Mammary epithelial cell (primary cell): ENCODE measurements at regions of chr5 and their contacts with region 1.

Region 1: DNA sequence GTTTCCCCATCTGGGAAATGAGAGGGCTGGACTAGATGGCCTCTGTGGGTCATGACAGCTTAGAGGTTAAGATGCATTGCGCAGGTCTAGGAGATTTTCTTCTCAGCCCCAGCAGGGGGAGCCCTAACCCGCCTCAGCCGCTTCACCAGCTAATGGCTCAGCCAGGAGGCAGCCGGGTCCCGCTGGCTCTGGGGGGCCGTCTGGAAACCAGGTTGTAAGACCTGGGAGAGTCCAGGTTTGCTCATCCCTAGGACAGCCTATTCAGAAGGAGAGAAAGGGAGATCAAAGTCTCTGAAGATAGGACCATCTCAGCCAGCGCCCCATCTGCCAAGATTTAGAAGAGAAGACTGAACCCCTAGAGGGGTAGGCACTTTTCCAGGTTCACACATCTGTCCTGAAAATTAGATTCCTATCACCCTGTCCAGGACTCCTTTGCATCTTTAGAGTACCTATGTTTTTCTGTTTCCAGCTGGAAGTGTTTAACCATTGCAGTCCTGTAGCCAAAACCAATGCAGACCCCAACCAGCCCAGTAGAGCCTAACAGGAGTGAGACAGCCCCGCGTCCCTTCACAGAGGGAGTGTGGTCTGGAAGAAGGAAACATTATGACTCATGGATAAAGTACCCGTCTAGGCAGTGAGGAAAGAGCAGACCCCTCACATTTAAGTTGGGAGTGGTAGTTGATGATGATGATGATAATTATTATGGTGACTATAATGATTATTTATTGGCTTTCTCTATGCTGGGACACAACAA is 27.5 kb downstream of the SPARC start:
- DNase-seq: peak; percentile 57
- H3K4me3 ChIP-seq: no peak overlapping the region
- H3K27ac ChIP-seq: no peak overlapping the region
- H3K4me1 ChIP-seq: peaks cover 7% of the 10 kb centered on the region
- H3K27me3 ChIP-seq: no peaks in the 10 kb centered on the region
- CTCF ChIP-seq: peak; percentile 71 to 89

Region 2: DNA sequence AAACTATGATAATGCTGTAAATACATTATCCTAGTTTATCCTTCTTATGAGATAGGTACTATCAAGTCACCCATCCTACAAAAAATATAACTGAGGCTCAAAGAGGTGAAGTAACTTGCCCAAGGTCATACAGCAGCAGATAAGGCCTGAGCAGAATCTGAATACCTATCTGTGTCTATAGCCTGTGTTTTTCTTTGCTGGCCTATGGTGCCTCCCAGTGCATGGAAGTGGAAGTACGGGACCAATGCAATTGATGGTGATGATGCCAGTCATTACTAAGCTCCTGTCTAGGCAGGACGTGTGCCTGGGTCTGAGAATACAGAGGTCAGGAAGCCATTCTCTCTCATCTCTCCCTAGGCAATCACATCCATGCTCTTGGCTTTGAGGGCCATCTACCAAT is 135.8 kb before region 1 on chr5:
- CTCF ChIA-PET with region 1: interaction called, 11 read pairs
- dilution Hi-C with region 1: no loop called
- in situ Hi-C with region 1: no loop called
- intact Hi-C with region 1: no loop called
- DNase-seq: peak; percentile 59
- H3K4me3 ChIP-seq: no peak overlapping the region
- H3K27ac ChIP-seq: no peak overlapping the region
- H3K4me1 ChIP-seq: no peaks in the 10 kb centered on the region
- H3K27me3 ChIP-seq: no peaks in the 10 kb centered on the region
- CTCF ChIP-seq: peak; percentile 61 to 63

Region 3: DNA sequence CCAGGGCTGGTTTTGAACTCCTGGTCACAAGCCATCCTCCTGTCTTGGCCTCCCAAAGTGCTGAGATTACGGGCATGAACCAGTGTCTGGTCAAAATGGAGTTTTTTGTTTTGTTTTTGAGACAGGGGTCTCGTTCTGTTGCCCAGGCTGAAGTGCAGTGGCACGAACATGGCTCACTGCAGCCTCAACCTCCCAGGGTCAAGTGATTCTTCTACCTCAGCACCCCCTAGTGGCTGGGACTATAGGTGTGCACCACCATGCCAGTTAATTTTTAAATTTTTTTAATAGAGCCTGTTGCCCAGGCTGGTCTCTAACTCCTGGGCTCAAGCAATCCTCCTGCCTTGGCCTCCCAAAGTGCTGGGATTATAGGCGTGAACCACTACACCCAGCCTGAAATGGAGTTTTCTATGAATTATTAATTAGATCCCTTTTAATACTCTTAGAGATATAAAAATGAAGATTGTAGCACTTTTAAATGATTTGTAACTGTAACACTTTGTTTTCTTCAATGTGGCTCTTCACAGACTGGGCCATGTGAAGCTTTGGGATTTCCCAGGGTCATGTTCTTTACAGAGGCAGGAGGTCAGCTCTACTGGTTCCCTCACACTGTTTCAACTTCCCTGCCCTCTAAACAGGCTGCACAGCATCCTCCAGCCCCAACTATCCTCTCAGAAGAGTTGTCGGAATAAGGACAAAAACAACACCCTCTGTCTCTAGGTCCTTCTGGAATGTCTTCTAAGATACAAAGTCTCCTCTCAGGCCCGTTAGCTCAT is 60.2 kb after region 1 on chr5:
- CTCF ChIA-PET with region 1: no interaction called
- dilution Hi-C with region 1: loop called (anchors 5 kb)
- in situ Hi-C with region 1: no loop called
- intact Hi-C with region 1: loop called (anchors 1 kb)
- DNase-seq: no peak
- H3K4me3 ChIP-seq: no peak overlapping the region
- H3K27ac ChIP-seq: no peak overlapping the region
- H3K4me1 ChIP-seq: peaks cover 12% of the 10 kb centered on the region
- H3K27me3 ChIP-seq: no peaks in the 10 kb centered on the region
- CTCF ChIP-seq: peak; percentile 51 to 70

Region 4: DNA sequence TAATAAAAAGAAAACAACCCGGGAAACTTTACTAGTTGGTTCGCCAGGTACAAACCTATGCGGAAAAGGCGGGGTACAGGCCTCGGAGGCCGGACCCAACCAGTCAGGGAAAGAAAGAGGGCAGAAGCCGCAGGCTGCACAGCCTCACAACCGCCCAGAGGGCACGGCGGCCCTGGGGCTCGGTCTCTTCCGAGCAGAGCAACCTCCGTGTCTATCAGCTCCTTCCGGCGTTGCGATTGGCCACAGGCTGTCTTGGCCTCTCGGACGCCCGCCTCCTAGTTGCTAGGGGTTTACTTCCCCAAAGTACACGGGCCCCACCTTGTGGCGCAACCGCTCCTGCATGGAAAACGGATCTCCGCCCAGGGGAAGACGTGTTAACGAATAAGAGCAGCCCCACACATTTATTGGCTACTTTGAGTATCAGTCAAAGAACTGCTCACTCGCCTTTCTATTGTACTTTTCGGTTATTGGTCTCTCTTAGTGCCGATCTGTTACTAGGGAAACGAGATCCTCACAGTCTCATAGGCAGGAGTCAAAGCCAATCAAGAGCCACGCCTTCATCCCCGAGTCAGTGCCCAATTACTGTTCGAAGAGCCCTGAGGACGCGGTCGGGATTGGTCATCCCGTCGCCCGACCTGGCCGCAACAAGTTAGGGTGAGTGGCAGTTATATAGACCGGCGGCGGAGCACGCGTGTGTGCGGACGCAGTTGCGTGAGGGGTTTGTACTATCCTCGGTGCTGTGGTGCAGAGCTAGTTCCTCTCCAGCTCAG is 112.3 kb after region 1 on chr5 and contains the start of gene G3BP1:
- CTCF ChIA-PET with region 1: interaction called, 6 read pairs
- dilution Hi-C with region 1: no loop called
- in situ Hi-C with region 1: no loop called
- intact Hi-C with region 1: loop called (anchors 1 kb)
- DNase-seq: peak; percentile 100
- H3K4me3 ChIP-seq: peak within 1 kb of the TSS; percentile 63 to 93 (median 80)
- H3K27ac ChIP-seq: peak within 1 kb of the TSS; percentile 84
- H3K4me1 ChIP-seq: peaks cover 26% of the 10 kb centered on the region
- H3K27me3 ChIP-seq: no peaks in the 10 kb centered on the region
- CTCF ChIP-seq: peak; percentile 36 to 77
- total RNA-seq, gene G3BP1: 193 to 252 TPM

Region 5: GRCh38 chr5:152142840-152143469 is 483.8 kb after region 1 on chr5:
- CTCF ChIA-PET with region 1: no interaction called
- dilution Hi-C with region 1: no loop called
- in situ Hi-C with region 1: no loop called
- intact Hi-C with region 1: loop called (anchors 10 kb)
- DNase-seq: peak; percentile 21
- H3K4me3 ChIP-seq: no peak overlapping the region
- H3K27ac ChIP-seq: no peak overlapping the region
- H3K4me1 ChIP-seq: no peaks in the 10 kb centered on the region
- H3K27me3 ChIP-seq: no peaks in the 10 kb centered on the region
- CTCF ChIP-seq: peak; percentile 86 to 95

Region 6: DNA sequence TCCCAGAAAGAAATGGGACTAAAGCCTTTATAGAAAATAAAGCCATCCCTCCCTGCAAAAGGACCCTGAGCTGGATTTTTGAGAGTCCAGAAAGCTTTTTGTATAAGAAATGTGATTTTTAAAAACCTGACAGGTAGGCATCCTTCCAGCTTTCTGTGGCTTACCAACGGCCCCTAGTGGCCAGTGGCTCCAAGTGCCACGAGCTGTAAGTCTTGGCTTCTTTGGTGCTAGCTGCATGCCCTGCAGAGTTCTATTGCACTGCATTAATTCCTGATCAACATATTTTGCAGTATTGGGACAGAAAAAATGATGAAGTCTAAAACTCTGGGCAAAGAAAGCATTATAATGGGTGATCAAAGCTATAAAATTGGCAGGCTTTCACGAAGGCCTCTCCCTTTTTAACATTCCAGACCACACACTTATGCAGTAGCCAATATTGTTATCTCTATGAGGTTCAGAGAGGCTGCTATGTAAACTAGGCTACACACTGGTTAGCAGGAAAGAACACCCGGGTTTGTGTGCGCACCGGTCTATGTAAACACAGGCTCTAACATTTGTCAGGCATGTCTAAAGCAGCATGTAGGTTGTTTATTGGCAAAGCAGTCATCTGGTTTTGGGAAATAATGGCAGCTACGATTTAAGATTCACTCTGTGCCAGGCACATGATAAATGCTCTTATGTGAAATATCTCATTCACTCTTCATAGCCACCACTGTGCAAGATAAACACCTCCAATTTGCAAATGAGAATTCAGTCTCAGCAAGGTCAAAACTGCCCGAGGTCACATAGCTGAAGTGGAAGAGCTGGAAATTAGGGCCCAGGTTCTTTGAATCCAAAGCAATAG is 690.7 kb after region 1 on chr5:
- CTCF ChIA-PET with region 1: no interaction called
- dilution Hi-C with region 1: no loop called
- in situ Hi-C with region 1: no loop called
- intact Hi-C with region 1: loop called (anchors 5 kb)
- DNase-seq: peak; percentile 24
- H3K4me3 ChIP-seq: no peak overlapping the region
- H3K27ac ChIP-seq: no peak overlapping the region
- H3K4me1 ChIP-seq: no peaks in the 10 kb centered on the region
- H3K27me3 ChIP-seq: no peaks in the 10 kb centered on the region
- CTCF ChIP-seq: peak; percentile 94 to 97

Region 7: DNA sequence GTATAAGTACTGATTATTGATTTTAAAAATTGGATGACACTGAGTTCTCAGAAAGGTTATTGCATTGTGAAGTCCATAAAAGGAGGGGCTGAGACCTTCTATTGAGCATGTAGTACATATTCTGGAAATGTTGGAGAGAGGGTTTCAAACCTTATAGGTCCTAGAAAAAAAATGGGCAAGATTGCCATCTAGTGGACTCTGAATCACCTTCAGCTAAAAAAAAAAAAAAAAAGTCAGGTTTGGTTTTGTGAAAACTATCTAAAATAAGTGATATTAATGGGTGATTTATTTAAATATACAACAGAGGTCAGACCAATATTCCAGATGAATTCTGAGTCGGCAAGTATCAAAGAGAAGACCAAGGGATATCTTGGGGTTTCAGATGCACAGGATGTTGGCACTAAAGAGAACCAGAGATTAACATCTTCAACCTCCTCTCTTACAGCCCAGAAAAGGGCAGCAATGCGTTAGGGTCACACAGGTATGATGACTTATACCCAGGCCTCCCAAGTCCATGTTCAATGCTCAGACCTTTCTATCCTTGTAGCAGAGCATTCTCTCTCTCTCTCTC is 855.7 kb after region 1 on chr5:
- CTCF ChIA-PET with region 1: no interaction called
- dilution Hi-C with region 1: no loop called
- in situ Hi-C with region 1: no loop called
- intact Hi-C with region 1: loop called (anchors 10 kb)
- DNase-seq: peak; percentile 5
- H3K4me3 ChIP-seq: no peak overlapping the region
- H3K27ac ChIP-seq: no peak overlapping the region
- H3K4me1 ChIP-seq: no peaks in the 10 kb centered on the region
- H3K27me3 ChIP-seq: no peaks in the 10 kb centered on the region
- CTCF ChIP-seq: peak; percentile 40 to 52

Region 8: GRCh38 chr5:152619756-152620155 is 960.6 kb after region 1 on chr5:
- CTCF ChIA-PET with region 1: no interaction called
- dilution Hi-C with region 1: no loop called
- in situ Hi-C with region 1: no loop called
- intact Hi-C with region 1: no loop called
- DNase-seq: no peak
- H3K4me3 ChIP-seq: no peak overlapping the region
- H3K27ac ChIP-seq: no peak overlapping the region
- H3K4me1 ChIP-seq: no peaks in the 10 kb centered on the region
- H3K27me3 ChIP-seq: peaks cover 2% of the 10 kb centered on the region
- CTCF ChIP-seq: no peak